A673 (cell line): ENCODE measurements at regions of chr11 and their contacts with region 1.

Region 1: GRCh38 chr11:103215812-103216211 is 106.6 kb downstream of the DYNC2H1 start:
- DNase-seq: no peak
- H3K4me3 ChIP-seq: no peak overlapping the region
- H3K27ac ChIP-seq: no peak overlapping the region
- H3K4me1 ChIP-seq: no peaks in the 10 kb centered on the region
- H3K27me3 ChIP-seq: no peaks in the 10 kb centered on the region
- CTCF ChIP-seq: no peak

Region 2: DNA sequence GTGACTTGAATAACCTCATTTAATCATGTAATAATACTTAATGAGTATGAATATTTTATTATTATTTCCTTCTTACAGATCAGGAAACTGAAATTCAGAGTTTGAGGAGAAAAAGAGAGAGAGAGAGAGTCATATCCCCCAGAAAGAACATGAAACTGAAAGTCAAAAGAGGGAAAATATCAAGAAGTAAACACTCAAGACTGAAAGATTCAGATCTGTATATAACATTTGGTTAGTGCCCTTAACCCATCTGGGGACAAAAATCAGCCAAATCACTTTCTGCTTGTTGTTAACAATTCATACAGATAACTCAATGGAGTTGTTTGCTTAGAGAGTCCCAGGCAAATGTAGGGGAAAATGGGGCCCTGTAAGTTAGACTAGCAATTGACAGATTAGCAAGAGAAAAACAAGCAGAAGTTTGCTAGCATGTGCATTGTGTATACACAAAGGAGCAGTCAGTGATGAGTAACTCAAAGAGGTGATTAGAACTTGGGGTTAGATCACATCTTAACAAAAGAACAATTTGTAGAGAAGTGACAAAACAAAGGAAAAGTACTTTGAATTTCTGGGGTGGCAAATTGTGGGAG is 234.4 kb before region 1 on chr11:
- CTCF ChIA-PET with region 1: no interaction called
- POLR2A ChIA-PET with region 1: no interaction called
- intact Hi-C with region 1: no loop called
- DNase-seq: no peak
- H3K4me3 ChIP-seq: no peak overlapping the region
- H3K27ac ChIP-seq: no peak overlapping the region
- H3K4me1 ChIP-seq: no peaks in the 10 kb centered on the region
- H3K27me3 ChIP-seq: no peaks in the 10 kb centered on the region
- CTCF ChIP-seq: no peak

Region 3: GRCh38 chr11:103234974-103235373 is 19.2 kb after region 1 on chr11:
- CTCF ChIA-PET with region 1: no interaction called
- POLR2A ChIA-PET with region 1: interaction called, 17 read pairs
- intact Hi-C with region 1: no loop called
- DNase-seq: no peak
- H3K4me3 ChIP-seq: no peak overlapping the region
- H3K27ac ChIP-seq: no peak overlapping the region
- H3K4me1 ChIP-seq: no peaks in the 10 kb centered on the region
- H3K27me3 ChIP-seq: no peaks in the 10 kb centered on the region
- CTCF ChIP-seq: no peak